ENCODE measurements at regions of chr18 and their contacts with region 1.

Region 1: GRCh38 chr18:47150029-47150823 is at the start of gene HDHD2:
- DNase-seq: peak; percentile 58
- ATAC-seq: peak; percentile 95
- H3K4me3 ChIP-seq: peak within 1 kb of the TSS; percentile 63 to 87 (median 75)
- H3K27ac ChIP-seq: peak within 1 kb of the TSS; percentile 81
- H3K4me1 ChIP-seq: peaks cover 33% of the 10 kb centered on the region
- H3K27me3 ChIP-seq: no peaks in the 10 kb centered on the region; a peak in 1 of 5 replicates
- CTCF ChIP-seq: 0 out of 2 replicates have a peak, but pooled peaks have one; percentile 43
- EP300 ChIP-seq: no peak
- POLR2A ChIP-seq: peak; percentile 87 to 90
- RAD21 ChIP-seq: no peak; the same call in 1 of the 2 replicates
- total RNA-seq, gene HDHD2: 34.7 and 44.4 TPM in 2 replicates

Region 2: GRCh38 chr18:46754188-46754587 is 396.0 kb before region 1 on chr18:
- CTCF ChIA-PET with region 1: no interaction called
- POLR2A ChIA-PET with region 1: no interaction called
- in situ Hi-C with region 1: no loop called
- intact Hi-C with region 1: no loop called
- DNase-seq: no peak
- ATAC-seq: no peak
- H3K4me3 ChIP-seq: no peak overlapping the region
- H3K27ac ChIP-seq: no peak overlapping the region
- H3K4me1 ChIP-seq: no peaks in the 10 kb centered on the region
- H3K27me3 ChIP-seq: peaks cover 4 to 45% of the 10 kb centered on the region in 2 experiments; a peak in 4 of 5 replicates
- CTCF ChIP-seq: no peak
- EP300 ChIP-seq: no peak
- POLR2A ChIP-seq: no peak
- RAD21 ChIP-seq: no peak

Region 3: DNA sequence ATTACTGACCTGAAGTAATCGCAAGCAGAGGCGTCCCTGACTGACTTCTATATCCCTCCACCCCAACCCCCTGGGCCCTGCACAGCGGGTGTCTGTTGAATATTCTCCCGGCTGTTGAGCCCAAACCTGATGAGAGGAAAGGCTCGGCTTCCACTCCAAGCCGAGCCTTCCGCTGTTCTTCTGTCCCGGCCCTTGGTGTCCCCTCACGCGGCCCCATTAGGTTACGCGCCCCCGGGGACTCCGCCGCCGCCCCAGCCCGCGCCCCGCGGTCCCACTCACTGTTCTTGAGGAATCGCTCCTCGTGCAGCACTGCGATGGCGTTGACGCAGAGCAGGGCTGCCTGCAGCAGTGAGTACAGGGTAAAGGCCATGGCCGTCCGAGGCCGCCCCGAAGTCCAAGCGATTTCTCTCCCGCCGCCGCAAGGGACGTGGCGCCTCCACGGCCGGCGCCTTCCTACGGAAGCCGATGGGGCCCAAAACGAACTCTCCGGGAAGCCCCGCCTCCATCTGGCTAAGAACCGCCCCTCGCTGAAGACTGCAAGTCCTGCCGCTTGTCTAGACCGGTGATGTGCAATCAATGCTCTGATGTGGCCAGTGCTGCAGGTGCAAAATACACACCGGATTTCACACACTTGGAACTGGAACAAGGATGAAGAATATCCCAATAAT is 25.8 kb after region 1 on chr18 and contains the start of gene IER3IP1:
- CTCF ChIA-PET with region 1: no interaction called
- POLR2A ChIA-PET with region 1: interaction called, 3 read pairs
- in situ Hi-C with region 1: no loop called
- intact Hi-C with region 1: loop called (anchors 1 kb)
- DNase-seq: peak; percentile 83
- ATAC-seq: peak; percentile 97
- H3K4me3 ChIP-seq: peak within 1 kb of the TSS; percentile 85 to 97 (median 88)
- H3K27ac ChIP-seq: peak within 1 kb of the TSS; percentile 93
- H3K4me1 ChIP-seq: peaks cover 30% of the 10 kb centered on the region
- H3K27me3 ChIP-seq: peaks cover 0 to 2% of the 10 kb centered on the region in 2 experiments; a peak in 1 of 5 replicates
- CTCF ChIP-seq: peak; percentile 29
- EP300 ChIP-seq: no peak
- POLR2A ChIP-seq: peak; percentile 88 to 90
- RAD21 ChIP-seq: 0 out of 2 replicates have a peak, but pooled peaks have one; percentile 19
- total RNA-seq, gene IER3IP1: 26.1 and 26.2 TPM in 2 replicates

Region 4: GRCh38 chr18:47254341-47254939 is 104.2 kb after region 1 on chr18:
- CTCF ChIA-PET with region 1: no interaction called
- POLR2A ChIA-PET with region 1: no interaction called
- in situ Hi-C with region 1: no loop called
- intact Hi-C with region 1: no loop called
- DNase-seq: peak; percentile 18
- ATAC-seq: peak; percentile 86
- H3K4me3 ChIP-seq: no peak overlapping the region
- H3K27ac ChIP-seq: no peak overlapping the region
- H3K4me1 ChIP-seq: no peaks in the 10 kb centered on the region
- H3K27me3 ChIP-seq: peaks cover 1 to 28% of the 10 kb centered on the region in 2 experiments; a peak in 4 of 5 replicates
- CTCF ChIP-seq: no peak
- EP300 ChIP-seq: no peak
- POLR2A ChIP-seq: no peak
- RAD21 ChIP-seq: no peak

Measured in HepG2 (cell line).